ENCODE measurements at regions of chr6 and their contacts with region 1.

Region 1: GRCh38 chr6:7137335-7138045 is 29.7 kb downstream of the RREB1 start:
- DNase-seq: peak; percentile 59 to 76
- ATAC-seq: peak; percentile 39 to 55 (median 48)
- H3K4me3 ChIP-seq: peak overlapping the region; percentile 50
- H3K27ac ChIP-seq: peak overlapping the region; percentile 99
- H3K4me1 ChIP-seq: peaks cover 86% of the 10 kb centered on the region
- H3K27me3 ChIP-seq: no peaks in the 10 kb centered on the region
- CTCF ChIP-seq: no peak

Region 2: GRCh38 chr6:6736791-6737654 is 400.5 kb before region 1 on chr6:
- intact Hi-C with region 1: loop called in 1 of 2 experiments (anchors 10 kb)
- DNase-seq: peak; percentile 91 to 97
- ATAC-seq: peak; percentile 91 to 96 (median 94)
- H3K4me3 ChIP-seq: peak overlapping the region; percentile 60
- H3K27ac ChIP-seq: peak overlapping the region; percentile 86
- H3K4me1 ChIP-seq: peaks cover 38% of the 10 kb centered on the region
- H3K27me3 ChIP-seq: no peaks in the 10 kb centered on the region
- CTCF ChIP-seq: no peak

Region 3: DNA sequence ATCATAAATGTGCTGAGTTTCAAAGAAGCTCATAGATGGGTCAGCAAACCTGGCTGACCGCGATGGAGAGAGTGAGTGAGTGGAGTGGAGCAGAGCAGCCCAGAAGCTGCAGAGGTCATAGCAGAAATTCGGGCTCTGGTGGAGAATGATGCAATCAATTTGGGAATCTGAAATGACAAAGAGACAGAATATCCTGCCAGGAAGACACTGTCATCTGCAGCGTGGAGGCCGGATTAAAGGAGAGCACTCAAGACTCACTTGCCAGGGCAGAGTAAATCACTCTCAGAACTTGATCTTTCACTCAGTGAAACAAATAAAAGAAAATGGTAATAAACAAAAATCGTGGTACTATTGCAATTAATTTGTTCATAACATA is 139.3 kb before region 1 on chr6:
- intact Hi-C with region 1: no loop called
- DNase-seq: peak; percentile 37 to 59
- ATAC-seq: peak; percentile 80 to 85 (median 82)
- H3K4me3 ChIP-seq: no peak overlapping the region
- H3K27ac ChIP-seq: peak overlapping the region; percentile 30
- H3K4me1 ChIP-seq: peaks cover 21% of the 10 kb centered on the region
- H3K27me3 ChIP-seq: no peaks in the 10 kb centered on the region
- CTCF ChIP-seq: no peak

Measured in psoas muscle (tissue), 8 donors.